Sciatic nerve (tissue), 2 donors: ENCODE measurements at regions of chr14 and their contacts with region 1.

Region 1: DNA sequence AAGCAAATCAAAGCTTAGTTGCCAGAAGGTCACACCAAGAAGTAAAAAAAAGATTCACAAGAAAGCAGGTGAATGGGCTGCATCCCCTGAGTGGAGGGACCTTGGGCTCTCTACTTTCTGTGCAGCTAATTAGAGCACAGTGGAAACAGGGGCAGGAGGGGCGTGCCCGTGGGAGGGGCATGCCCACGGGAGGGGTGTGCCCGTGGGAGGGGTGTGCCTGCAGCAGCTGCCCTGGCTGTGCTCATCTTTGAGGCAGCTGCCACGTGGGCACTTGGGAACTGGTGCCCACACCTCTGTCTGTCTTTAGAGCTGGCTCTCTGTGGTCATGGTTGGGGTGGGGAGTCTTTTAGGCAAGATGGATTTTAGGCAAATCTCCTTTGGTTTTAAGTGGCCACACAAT is 60.0 kb downstream of the EML1 start:
- DNase-seq: no peak
- ATAC-seq: peak; percentile 78

Region 2: DNA sequence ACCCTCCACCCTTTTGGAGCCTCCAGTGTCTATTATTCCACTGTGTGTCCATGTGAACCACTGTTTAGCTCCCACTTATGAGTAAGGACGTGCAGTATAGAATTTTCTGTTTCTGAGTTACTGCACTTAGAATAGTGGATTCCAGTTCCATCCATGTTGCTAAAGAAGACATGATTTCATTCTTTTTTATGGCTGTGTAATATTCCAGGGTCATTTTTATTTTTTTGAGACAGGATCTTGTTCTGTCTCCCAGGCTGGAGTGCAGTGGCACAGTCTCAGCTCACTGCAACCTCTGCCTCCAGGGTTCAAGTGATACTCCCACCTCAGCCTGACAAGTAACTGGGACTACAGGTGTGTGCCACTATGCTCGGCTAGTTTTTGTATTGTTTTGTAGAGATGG is 28.4 kb before region 1 on chr14:
- intact Hi-C with region 1: loop called (anchors 1 kb)
- DNase-seq: no peak
- ATAC-seq: no peak